ENCODE measurements at regions of chr16 and their contacts with region 1.

Region 1: DNA sequence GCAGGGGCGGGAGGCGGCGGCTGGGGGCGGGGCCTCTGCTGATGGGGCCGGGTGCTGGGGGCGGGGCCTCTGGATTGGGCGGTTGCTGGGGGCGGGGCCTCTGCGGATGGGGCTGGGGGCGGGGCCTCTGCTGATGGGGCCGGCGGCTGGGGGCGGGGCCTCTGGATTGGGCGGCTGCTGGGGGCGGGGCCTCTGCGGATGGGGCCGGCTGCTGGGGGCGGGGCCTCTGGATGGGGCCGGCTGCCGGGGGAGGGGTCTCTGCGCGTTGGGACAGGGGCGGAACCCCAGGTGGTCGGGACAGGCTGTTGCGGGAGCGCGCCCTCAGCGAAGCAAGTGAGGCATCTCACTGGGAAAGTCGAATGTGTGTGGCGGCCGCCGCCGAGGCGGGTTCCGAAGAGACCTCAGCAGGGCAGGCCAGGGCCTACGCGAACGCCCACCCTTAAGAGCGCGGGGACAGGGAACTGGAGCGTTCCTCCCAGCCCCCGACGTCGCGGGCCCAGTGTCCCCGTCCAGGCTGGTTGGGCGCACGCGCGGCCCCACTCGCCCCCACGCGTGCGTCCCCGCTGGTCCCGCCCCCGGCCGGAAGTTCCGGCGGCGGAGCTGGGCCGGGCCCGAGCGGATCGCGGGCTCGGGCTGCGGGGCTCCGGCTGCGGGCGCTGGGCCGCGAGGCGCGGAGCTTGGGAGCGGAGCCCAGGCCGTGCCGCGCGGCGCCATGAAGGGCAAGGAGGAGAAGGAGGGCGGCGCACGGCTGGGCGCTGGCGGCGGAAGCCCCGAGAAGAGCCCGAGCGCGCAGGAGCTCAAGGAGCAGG is at the start of gene STUB1:
- DNase-seq: peak; percentile 23
- H3K4me3 ChIP-seq: peak within 1 kb of the TSS; percentile 69
- H3K27me3 ChIP-seq: no peaks in the 10 kb centered on the region
- CTCF ChIP-seq: no peak
- polyA plus RNA-seq, gene STUB1: 75.9 and 148 TPM in 2 replicates

Region 2: GRCh38 chr16:239953-240287 is 440.1 kb before region 1 on chr16:
- CTCF ChIA-PET with region 1: no interaction called
- POLR2A ChIA-PET with region 1: no interaction called
- DNase-seq: no peak
- H3K4me3 ChIP-seq: no peak overlapping the region
- H3K27me3 ChIP-seq: no peaks in the 10 kb centered on the region
- CTCF ChIP-seq: no peak

Region 3: DNA sequence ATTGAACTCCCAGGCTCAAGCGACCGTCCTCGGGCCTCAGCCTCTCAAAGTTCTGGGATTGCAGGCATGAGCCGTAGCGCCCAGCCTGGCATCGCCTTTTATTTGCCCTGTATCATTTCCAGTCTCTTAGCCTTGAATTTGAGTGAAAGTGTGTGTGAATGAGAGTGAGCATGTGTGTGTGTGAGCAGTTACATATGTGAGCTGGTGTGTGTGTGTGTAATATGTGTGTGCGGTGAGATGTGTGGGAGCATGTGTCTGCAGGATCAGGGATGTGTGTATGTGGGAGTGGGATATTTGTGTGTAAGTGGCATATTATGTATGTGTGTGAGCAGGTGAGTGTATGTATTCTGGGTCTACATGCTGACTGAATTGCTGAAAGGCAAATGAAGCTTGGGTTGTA is 249.1 kb before region 1 on chr16:
- CTCF ChIA-PET with region 1: no interaction called
- POLR2A ChIA-PET with region 1: no interaction called
- DNase-seq: no peak
- H3K4me3 ChIP-seq: no peak overlapping the region
- H3K27me3 ChIP-seq: no peaks in the 10 kb centered on the region
- CTCF ChIP-seq: no peak

Region 4: DNA sequence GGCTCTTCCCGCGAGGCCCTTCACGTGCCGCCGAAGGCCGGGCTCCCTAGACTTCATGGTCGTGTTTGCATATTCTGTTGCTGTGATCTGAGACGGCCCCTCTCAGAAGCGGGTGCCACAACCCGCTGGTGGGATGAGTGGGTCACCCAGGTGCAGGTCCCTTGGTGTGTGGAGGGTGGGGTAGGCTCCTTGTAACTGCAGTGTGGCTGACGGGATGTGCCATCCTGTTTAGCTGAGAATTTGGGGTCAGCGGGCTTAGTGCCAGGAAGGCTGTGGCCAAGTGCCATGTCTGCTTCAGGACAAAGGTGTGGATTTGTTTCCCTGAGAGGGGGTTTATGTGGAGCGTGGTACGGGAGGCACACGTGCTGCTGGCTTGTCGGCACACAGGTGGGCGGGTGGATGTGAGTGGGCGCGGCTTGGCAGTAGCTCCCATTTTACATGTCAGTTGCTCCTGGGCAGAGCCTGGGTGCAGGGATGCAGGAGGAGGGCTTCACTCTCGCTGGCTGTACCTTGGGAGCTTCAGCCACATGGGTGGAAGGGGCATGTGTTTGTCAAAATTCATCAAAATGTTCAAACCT is 58.4 kb before region 1 on chr16:
- CTCF ChIA-PET with region 1: no interaction called
- POLR2A ChIA-PET with region 1: no interaction called
- DNase-seq: no peak
- H3K4me3 ChIP-seq: no peak overlapping the region
- H3K27me3 ChIP-seq: no peaks in the 10 kb centered on the region
- CTCF ChIP-seq: no peak

Region 5: DNA sequence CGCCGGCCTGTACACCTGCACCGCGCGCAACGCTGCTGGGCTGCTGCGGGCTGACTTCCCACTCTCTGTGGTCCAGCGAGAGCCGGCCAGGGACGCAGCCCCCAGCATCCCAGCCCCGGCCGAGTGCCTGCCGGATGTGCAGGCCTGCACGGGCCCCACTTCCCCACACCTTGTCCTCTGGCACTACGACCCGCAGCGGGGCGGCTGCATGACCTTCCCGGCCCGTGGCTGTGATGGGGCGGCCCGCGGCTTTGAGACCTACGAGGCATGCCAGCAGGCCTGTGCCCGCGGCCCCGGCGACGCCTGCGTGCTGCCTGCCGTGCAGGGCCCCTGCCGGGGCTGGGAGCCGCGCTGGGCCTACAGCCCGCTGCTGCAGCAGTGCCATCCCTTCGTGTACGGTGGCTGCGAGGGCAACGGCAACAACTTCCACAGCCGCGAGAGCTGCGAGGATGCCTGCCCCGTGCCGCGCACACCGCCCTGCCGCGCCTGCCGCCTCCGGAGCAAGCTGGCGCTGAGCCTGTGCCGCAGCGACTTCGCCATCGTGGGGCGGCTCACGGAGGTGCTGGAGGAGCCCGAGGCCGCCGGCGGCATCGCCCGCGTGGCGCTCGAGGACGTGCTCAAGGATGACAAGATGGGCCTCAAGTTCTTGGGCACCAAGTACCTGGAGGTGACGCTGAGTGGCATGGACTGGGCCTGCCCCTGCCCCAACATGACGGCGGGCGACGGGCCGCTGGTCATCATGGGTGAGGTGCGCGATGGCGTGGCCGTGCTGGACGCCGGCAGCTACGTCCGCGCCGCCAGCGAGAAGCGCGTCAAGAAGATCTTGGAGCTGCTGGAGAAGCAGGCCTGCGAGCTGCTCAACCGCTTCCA is 46.6 kb before region 1 on chr16:
- CTCF ChIA-PET with region 1: no interaction called
- POLR2A ChIA-PET with region 1: interaction called, 14 read pairs
- DNase-seq: no peak
- H3K4me3 ChIP-seq: no peak overlapping the region
- H3K27me3 ChIP-seq: no peaks in the 10 kb centered on the region
- CTCF ChIP-seq: no peak

Region 6: DNA sequence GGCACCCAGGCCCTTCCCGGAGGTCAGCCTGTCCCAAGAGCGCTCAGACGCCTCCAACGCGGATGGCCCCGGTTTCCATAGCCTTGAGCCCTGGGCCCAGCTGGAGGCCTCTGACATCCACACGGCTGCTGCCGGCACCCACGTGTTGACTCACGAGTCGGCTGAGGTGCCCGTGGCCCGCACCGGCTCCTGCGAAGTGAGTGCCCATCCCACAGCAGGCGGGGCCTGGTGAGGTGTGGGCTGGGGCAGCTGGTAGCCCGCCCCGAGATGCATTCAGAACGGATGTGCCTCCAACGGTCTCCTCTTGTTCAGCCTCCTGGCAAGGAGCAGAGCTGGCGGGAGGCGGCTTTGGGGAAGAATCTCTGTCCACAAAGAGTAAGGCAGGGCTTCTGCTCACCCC is 28.2 kb before region 1 on chr16:
- CTCF ChIA-PET with region 1: no interaction called
- POLR2A ChIA-PET with region 1: no interaction called
- DNase-seq: no peak
- H3K4me3 ChIP-seq: no peak overlapping the region
- H3K27me3 ChIP-seq: no peaks in the 10 kb centered on the region
- CTCF ChIP-seq: no peak

Region 7: GRCh38 chr16:667780-668518 is 12.1 kb before region 1 on chr16 and contains the start of gene RHOT2:
- CTCF ChIA-PET with region 1: interaction called, 20 read pairs
- POLR2A ChIA-PET with region 1: no interaction called
- DNase-seq: no peak
- H3K4me3 ChIP-seq: peak within 1 kb of the TSS; percentile 99
- H3K27me3 ChIP-seq: no peaks in the 10 kb centered on the region
- CTCF ChIP-seq: peak; percentile 40
- polyA plus RNA-seq, gene RHOT2: 37.1 and 81.7 TPM in 2 replicates

Measured in BJ (cell line).